ENCODE measurements at regions of chr17 and their contacts with region 1.

Region 1: GRCh38 chr17:7856883-7857723 is at the start of gene NAA38:
- DNase-seq: peak; percentile 94
- H3K4me3 Mint-ChIP-seq: no peak within 1 kb of the TSS
- H3K27ac Mint-ChIP-seq: no peak within 1 kb of the TSS
- H3K4me1 Mint-ChIP-seq: peaks cover 20% of the 10 kb centered on the region
- H3K27me3 Mint-ChIP-seq: no peaks in the 10 kb centered on the region
- total RNA-seq, gene NAA38: 52.6 and 53.0 TPM in 2 replicates

Region 2: GRCh38 chr17:7496470-7497183 is 360.5 kb before region 1 on chr17:
- intact Hi-C with region 1: no loop called
- DNase-seq: no peak
- H3K4me3 Mint-ChIP-seq: no peak overlapping the region
- H3K27ac Mint-ChIP-seq: no peak overlapping the region
- H3K4me1 Mint-ChIP-seq: peaks cover 10% of the 10 kb centered on the region
- H3K27me3 Mint-ChIP-seq: no peaks in the 10 kb centered on the region

Region 3: GRCh38 chr17:7844292-7845154 is 12.6 kb before region 1 on chr17:
- intact Hi-C with region 1: loop called (anchors 1 kb)
- DNase-seq: peak; percentile 86
- H3K4me3 Mint-ChIP-seq: peak overlapping the region; percentile 90
- H3K27ac Mint-ChIP-seq: peak overlapping the region; percentile 100
- H3K4me1 Mint-ChIP-seq: peaks cover 23% of the 10 kb centered on the region
- H3K27me3 Mint-ChIP-seq: no peaks in the 10 kb centered on the region

Region 4: DNA sequence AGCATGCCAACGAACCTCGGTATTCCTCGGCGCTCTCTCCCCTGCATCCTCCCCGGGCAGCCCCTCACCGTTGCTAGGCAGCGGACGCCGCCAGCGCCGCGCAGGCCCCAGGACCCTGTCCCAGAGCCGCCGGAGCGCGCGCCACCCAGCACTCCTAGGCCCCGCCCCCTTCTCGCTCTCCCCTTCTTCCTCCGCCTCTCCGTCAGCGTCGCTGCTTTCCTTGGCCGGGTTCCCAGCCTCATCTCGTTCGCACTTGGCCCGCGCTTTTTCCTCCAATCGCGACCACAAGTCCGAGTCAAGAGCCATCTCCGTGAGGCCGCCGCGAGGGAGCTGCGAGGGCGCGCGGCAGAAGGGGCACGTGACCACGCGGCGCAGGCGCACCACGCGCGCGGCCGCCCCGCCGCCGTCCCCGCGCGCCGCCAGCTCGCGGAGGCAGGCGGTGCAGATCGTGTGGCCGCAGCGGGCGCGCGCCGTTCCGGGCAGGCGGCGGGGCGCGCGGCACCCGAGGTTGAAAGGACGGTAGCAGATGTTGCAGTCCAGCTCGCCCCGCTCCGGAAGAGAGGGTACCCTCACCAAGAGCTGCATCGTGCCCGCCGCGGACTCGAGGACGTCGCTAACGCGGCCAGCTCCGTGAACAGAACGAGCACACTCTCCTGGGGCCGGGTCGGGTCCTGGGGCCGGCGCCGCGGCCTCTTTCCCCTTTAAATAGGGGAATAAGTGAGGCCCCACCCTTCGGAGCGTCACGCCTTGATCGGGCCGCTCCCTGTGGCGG is 58.7 kb after region 1 on chr17 and contains the start of gene RNF227:
- intact Hi-C with region 1: loop called (anchors 2 kb)
- DNase-seq: peak; percentile 83
- H3K4me3 Mint-ChIP-seq: peak within 1 kb of the TSS; percentile 92
- H3K27ac Mint-ChIP-seq: peak within 1 kb of the TSS; percentile 96
- H3K4me1 Mint-ChIP-seq: peaks cover 22% of the 10 kb centered on the region
- H3K27me3 Mint-ChIP-seq: no peaks in the 10 kb centered on the region
- total RNA-seq, gene RNF227: 4.8 and 5.0 TPM in 2 replicates

Region 5: GRCh38 chr17:8057691-8058114 is 200.6 kb after region 1 on chr17:
- intact Hi-C with region 1: loop called (anchors 10 kb)
- DNase-seq: peak; percentile 30
- H3K4me3 Mint-ChIP-seq: no peak overlapping the region
- H3K27ac Mint-ChIP-seq: no peak overlapping the region
- H3K4me1 Mint-ChIP-seq: peaks cover 26% of the 10 kb centered on the region
- H3K27me3 Mint-ChIP-seq: peaks cover 47% of the 10 kb centered on the region

Measured in activated T-helper 2 cell treated with anti-CD3 and anti-CD28 coated beads, Interferon-gamma antibody, Interleukin-2, Interleukin-4, amounts not matched to agents 10 μg/mL and 5 μg/mL and 100 μg/mL, durations not matched to agents 14 hours and 24 hours and 36 hours (primary cell).